PC-3 (cell line): ENCODE measurements at regions of chr22 and their contacts with region 1.

Region 1: GRCh38 chr22:27919222-27919941 is at the start of gene PITPNB:
- DNase-seq: peak; percentile 96
- ATAC-seq: peak; percentile 88
- H3K4me3 ChIP-seq: peak within 1 kb of the TSS; percentile 91
- H3K27ac ChIP-seq: peak within 1 kb of the TSS; percentile 82
- H3K4me1 ChIP-seq: peaks cover 24% of the 10 kb centered on the region
- H3K27me3 ChIP-seq: no peaks in the 10 kb centered on the region
- CTCF ChIP-seq: no peak
- total RNA-seq, gene PITPNB: 15.3 and 22.7 TPM in 2 replicates

Region 2: DNA sequence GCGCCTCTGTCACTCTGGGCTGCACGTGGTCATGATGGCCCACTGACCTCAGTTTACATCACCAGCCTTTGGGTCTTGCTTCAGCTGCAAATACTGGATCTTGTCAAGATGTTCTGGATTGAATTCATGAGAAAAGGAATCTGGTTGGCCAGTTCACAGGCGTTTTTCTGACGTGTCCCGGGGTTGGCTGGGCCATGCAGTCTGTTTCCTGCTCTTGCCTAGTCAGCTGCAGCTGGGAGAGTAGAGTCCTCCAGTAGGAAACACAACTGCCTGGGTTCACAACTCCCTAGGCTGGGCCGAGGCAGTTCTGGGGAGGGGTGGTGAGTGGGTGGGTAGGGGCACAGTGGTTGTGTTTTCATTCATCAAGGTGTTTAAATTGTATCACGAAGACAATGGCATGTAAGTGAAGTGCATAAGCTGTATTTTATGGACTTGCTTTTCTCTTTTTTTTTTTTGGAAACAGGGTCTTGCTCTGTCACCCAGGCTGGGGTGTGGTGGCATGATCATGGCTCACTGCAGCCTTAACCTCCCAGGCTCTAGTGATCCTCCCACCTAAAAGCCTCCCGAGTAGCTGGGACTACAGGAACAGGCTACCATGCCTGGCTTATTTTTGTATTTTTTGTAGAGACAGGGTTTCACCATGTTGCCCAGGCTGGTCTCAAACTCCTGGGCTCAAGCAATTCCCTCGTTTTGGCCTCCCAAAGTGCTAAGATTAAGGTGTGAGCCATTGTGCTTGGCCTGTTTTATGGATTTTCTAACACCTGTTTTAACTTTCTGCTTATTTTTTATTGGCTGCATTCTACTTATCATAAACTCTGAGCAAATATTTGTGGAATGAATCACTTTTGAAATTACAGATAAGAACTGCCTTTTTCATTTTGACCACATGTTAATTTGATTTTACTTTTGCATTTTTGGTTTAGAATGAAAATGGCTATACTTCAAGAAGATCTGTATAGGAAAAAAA is 53.6 kb after region 1 on chr22:
- CTCF ChIA-PET with region 1: no interaction called
- POLR2A ChIA-PET with region 1: no interaction called
- intact Hi-C with region 1: loop called (anchors 10 kb)
- DNase-seq: peak; percentile 7
- ATAC-seq: no peak; the same call in 1 of the 2 replicates
- H3K4me3 ChIP-seq: no peak overlapping the region
- H3K27ac ChIP-seq: no peak overlapping the region
- H3K4me1 ChIP-seq: no peaks in the 10 kb centered on the region
- H3K27me3 ChIP-seq: no peaks in the 10 kb centered on the region
- CTCF ChIP-seq: no peak